Cardiac septum (tissue), 1 donor: ENCODE measurements at regions of chr11 and their contacts with region 1.

Region 1: DNA sequence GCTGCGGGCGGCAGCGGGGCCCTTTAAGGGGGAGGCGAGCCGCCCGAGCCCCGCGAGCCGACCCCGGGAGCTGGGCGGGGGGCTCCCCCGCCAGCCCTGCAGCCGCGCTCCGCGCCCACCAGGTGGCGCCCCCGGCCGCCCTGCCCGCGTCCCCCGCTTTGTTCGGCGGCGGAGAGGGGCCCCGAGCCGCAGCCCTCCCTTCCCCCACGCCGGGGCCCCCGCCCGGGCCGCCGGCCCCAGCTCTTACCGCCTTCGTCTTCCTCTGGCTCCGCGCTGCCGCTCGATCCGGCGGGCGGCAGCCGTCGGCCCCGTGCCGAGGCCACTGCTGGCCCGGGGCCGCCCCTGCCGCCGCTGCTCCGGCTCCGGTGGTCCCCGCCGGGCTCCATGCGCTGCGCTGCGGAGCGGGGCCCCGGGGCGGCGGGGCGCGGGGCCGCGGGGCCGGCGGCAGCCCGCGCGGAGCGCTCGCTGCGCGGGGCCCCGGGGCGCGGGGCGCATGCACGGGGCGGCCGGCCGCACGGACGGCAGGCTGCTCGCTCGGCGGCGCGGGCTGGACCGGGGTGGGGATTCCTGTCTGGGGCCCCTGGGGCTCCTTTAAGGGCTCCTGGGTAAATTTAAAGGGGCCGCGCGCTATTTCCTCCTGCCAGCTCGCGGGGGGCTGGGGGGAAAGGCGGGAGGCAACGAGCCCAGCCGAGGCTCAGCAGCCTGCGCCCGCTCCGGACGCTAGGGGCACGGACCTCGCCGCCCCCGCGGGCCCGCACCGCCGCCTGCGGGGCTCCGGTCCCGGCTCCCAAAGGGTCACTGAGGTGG is at the start of gene ZFTA:
- DNase-seq: peak; percentile 85
- total RNA-seq, gene ZFTA: 14.3 TPM

Region 2: GRCh38 chr11:63745304-63746170 is 22.9 kb before region 1 on chr11:
- intact Hi-C with region 1: no loop called
- DNase-seq: no peak

Region 3: GRCh38 chr11:63813035-63813562 is 44.7 kb after region 1 on chr11 and contains the start of gene SPINDOC:
- intact Hi-C with region 1: loop called (anchors 5 kb)
- DNase-seq: peak; percentile 89
- total RNA-seq, gene SPINDOC: 14.0 TPM

Region 4: GRCh38 chr11:63938479-63939396 is 170.3 kb after region 1 on chr11 and contains the start of gene NAA40:
- intact Hi-C with region 1: loop called (anchors 5 kb)
- DNase-seq: peak; percentile 92
- total RNA-seq, gene NAA40: 19.2 TPM

Region 5: GRCh38 chr11:64152841-64153691 is 384.6 kb after region 1 on chr11:
- intact Hi-C with region 1: loop called (anchors 10 kb)
- DNase-seq: peak; percentile 91